ENCODE measurements at regions of chr9 and their contacts with region 1.

Region 1: GRCh38 chr9:113876151-113876992 is at the start of gene ZNF618:
- DNase-seq: peak in 5 of 9 donors; percentile 8 to 41 (median 20)
- ATAC-seq: peak; percentile 73
- H3K4me3 ChIP-seq: peak within 1 kb of the TSS; percentile 52
- H3K4me3 Mint-ChIP-seq: peak within 1 kb of the TSS; percentile 81 to 98 (median 94)
- H3K27ac ChIP-seq: no peak within 1 kb of the TSS
- H3K27ac Mint-ChIP-seq: peak within 1 kb of the TSS in 4 of 9 donors; percentile 25 to 73 (median 66)
- H3K4me1 ChIP-seq: peaks cover 0 to 4% of the 10 kb centered on the region in 2 donors
- H3K4me1 Mint-ChIP-seq: peaks cover 3 to 10% (median 7%) of the 10 kb centered on the region in 7 donors
- H3K27me3 ChIP-seq: no peaks in the 10 kb centered on the region
- H3K27me3 Mint-ChIP-seq: peaks cover 12 to 50% (median 34%) of the 10 kb centered on the region in 5 donors
- total RNA-seq, gene ZNF618: 0.24 to 3.3 (median 1.2) TPM

Region 2: DNA sequence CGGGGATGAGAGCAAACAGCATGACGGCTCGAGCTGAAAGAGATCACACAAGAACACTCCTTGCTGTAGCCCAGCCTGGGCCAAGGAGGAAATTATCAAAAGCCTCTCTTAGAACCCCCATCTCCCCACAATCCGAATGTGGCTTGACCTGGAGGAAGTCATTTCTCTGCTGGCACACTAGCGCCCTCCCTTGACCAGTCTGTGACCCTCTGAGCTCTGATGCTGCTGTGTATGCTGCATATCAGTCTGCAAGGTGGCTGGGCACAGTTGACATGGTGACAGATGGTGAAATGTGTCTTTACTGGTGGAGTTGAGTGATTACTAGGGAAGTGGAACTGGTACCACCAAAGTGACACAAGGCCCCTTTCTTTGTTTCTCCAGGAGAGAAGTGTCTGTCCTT is 989.0 kb before region 1 on chr9:
- CTCF ChIA-PET with region 1: no interaction called
- POLR2A ChIA-PET with region 1: no interaction called
- intact Hi-C with region 1: no loop called
- DNase-seq: no peak
- ATAC-seq: peak; percentile 76
- H3K4me3 ChIP-seq: no peak overlapping the region
- H3K4me3 Mint-ChIP-seq: no peak overlapping the region
- H3K27ac ChIP-seq: no peak overlapping the region
- H3K27ac Mint-ChIP-seq: no peak overlapping the region
- H3K4me1 ChIP-seq: no peaks in the 10 kb centered on the region
- H3K4me1 Mint-ChIP-seq: no peaks in the 10 kb centered on the region
- H3K27me3 ChIP-seq: no peaks in the 10 kb centered on the region
- H3K27me3 Mint-ChIP-seq: peaks cover 18 to 36% (median 26%) of the 10 kb centered on the region in 5 donors

Region 3: GRCh38 chr9:113682297-113682771 is 194.0 kb before region 1 on chr9:
- CTCF ChIA-PET with region 1: no interaction called
- POLR2A ChIA-PET with region 1: no interaction called
- intact Hi-C with region 1: loop called in 1 of 2 experiments (anchors 5 kb)
- DNase-seq: peak in 2 of 9 donors; percentile 20 to 51
- ATAC-seq: peak; percentile 41
- H3K4me3 ChIP-seq: no peak overlapping the region
- H3K4me3 Mint-ChIP-seq: no peak overlapping the region
- H3K27ac ChIP-seq: no peak overlapping the region
- H3K27ac Mint-ChIP-seq: no peak overlapping the region
- H3K4me1 ChIP-seq: no peaks in the 10 kb centered on the region
- H3K4me1 Mint-ChIP-seq: peaks cover 0 to 21% (median 3%) of the 10 kb centered on the region in 7 donors
- H3K27me3 ChIP-seq: no peaks in the 10 kb centered on the region
- H3K27me3 Mint-ChIP-seq: peaks cover 36 to 67% (median 51%) of the 10 kb centered on the region in 5 donors

Region 4: GRCh38 chr9:113737517-113738271 is 138.7 kb before region 1 on chr9:
- CTCF ChIA-PET with region 1: no interaction called
- POLR2A ChIA-PET with region 1: no interaction called
- intact Hi-C with region 1: loop called in 1 of 2 experiments (anchors 5 kb)
- DNase-seq: peak in 3 of 9 donors; percentile 16 to 42 (median 27)
- ATAC-seq: peak; percentile 48
- H3K4me3 ChIP-seq: no peak overlapping the region
- H3K4me3 Mint-ChIP-seq: no peak overlapping the region
- H3K27ac ChIP-seq: no peak overlapping the region
- H3K27ac Mint-ChIP-seq: peak overlapping the region in 1 of 9 donors; percentile 33
- H3K4me1 ChIP-seq: no peaks in the 10 kb centered on the region
- H3K4me1 Mint-ChIP-seq: peaks cover 0 to 6% (median 0%) of the 10 kb centered on the region in 7 donors
- H3K27me3 ChIP-seq: no peaks in the 10 kb centered on the region
- H3K27me3 Mint-ChIP-seq: peaks cover 0 to 54% (median 29%) of the 10 kb centered on the region in 5 donors

Region 5: DNA sequence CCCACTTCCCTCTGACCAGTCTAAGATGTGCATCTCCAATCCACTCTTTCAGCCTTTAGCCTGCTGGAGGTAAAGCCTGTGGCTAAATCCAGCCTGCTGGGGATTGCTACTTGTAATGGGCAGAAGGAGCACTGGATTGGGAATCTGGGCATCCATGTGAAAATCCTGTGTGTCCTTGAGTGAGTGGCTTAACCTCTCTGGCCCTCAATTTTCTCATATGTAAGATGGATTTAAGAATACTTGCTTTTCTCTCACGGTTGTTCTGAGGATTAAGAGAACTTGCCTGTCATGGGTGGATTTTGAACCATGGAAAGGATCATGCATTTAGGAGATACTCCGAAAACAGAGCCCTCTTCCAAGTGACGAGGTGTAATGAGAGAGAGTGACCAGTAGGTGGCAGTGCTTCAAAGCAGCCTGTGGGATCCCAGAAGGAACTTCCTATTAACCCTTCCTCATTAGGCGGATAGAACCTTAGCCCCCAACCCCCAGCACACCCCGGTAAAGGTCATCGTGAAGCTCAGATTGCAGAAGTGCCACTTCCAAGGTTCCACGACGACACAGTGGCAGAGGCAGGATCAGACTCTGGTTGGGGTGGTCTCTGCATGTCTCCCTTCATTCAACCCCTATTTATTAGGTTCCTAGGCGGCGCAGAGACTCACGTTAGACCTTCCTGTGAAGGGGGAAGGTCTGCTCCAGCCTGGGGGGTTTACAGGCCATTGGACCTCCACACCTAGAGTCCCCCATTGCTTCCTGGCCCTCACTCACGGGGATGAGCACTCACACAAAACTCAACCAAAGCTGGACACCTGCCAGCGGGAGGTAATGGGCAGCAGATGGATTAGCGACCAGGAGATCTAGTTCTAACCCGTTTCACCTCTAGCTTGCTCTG is 69.0 kb before region 1 on chr9:
- CTCF ChIA-PET with region 1: no interaction called
- POLR2A ChIA-PET with region 1: no interaction called
- intact Hi-C with region 1: loop called in 1 of 2 experiments (anchors 1 kb)
- DNase-seq: peak in 6 of 9 donors; percentile 4 to 32 (median 19)
- ATAC-seq: peak; percentile 73
- H3K4me3 ChIP-seq: no peak overlapping the region
- H3K4me3 Mint-ChIP-seq: no peak overlapping the region
- H3K27ac ChIP-seq: no peak overlapping the region
- H3K27ac Mint-ChIP-seq: no peak overlapping the region
- H3K4me1 ChIP-seq: no peaks in the 10 kb centered on the region
- H3K4me1 Mint-ChIP-seq: peaks cover 0 to 4% (median 0%) of the 10 kb centered on the region in 7 donors
- H3K27me3 ChIP-seq: peaks cover 0 to 2% of the 10 kb centered on the region in 2 donors
- H3K27me3 Mint-ChIP-seq: peaks cover 7 to 32% (median 12%) of the 10 kb centered on the region in 5 donors

Region 6: DNA sequence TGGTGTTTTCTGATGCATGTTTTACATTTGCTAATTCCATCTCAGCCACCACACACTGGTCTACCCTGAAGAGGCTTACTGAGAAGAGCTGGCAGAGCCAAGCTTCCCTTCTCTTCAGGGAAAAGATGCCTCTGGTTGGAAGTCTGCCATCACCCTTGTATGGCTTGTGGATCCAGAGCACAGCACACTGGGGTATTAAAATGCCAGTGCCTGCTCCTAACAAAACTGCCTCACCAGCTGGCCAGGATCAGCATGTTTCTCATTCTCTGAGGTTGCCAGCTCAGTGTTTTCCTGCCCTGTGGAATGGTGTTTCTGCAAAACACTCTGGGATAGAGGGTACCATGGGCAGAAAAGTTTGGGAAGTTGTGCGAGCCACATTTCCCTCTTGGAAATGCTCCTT is 31.9 kb before region 1 on chr9:
- CTCF ChIA-PET with region 1: no interaction called
- POLR2A ChIA-PET with region 1: no interaction called
- intact Hi-C with region 1: no loop called
- DNase-seq: no peak
- ATAC-seq: no peak
- H3K4me3 ChIP-seq: no peak overlapping the region
- H3K4me3 Mint-ChIP-seq: no peak overlapping the region
- H3K27ac ChIP-seq: no peak overlapping the region
- H3K27ac Mint-ChIP-seq: no peak overlapping the region
- H3K4me1 ChIP-seq: no peaks in the 10 kb centered on the region
- H3K4me1 Mint-ChIP-seq: no peaks in the 10 kb centered on the region
- H3K27me3 ChIP-seq: no peaks in the 10 kb centered on the region
- H3K27me3 Mint-ChIP-seq: peaks cover 5 to 17% (median 12%) of the 10 kb centered on the region in 5 donors

Measured in naive thymus-derived CD4-positive, alpha-beta T cell (primary cell).